ENCODE measurements at regions of chr13 and their contacts with region 1.

Region 1: DNA sequence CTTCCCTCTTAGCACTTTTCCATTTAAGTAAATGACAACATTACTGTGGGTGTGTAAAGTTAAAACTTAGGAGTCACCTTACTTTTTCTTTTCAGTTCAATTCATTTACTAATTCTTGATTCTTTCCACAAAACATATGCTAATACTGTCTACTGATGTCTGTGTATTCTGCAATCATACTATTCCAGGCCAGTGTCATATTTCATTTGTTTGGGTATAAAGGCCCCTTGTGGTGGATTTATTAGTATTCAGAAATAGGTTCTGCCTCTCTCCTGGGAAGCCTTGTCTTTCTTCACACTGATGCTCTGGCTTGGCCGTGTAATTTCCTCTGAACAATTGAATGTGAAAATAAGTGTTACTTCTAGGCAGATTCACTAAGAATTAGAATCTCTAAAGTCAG is 621.9 kb upstream of the SPRY2 start:
- DNase-seq: peak; percentile 32
- H3K4me3 ChIP-seq: no peak overlapping the region
- H3K27ac ChIP-seq: peak overlapping the region; percentile 70
- H3K4me1 ChIP-seq: peaks cover 15% of the 10 kb centered on the region
- H3K27me3 ChIP-seq: no peaks in the 10 kb centered on the region
- CTCF ChIP-seq: no peak
- POLR2A ChIP-seq: no peak

Region 2: GRCh38 chr13:80529734-80530133 is 433.1 kb before region 1 on chr13:
- CTCF ChIA-PET with region 1: no interaction called
- POLR2A ChIA-PET with region 1: no interaction called
- dilution Hi-C with region 1: no loop called
- intact Hi-C with region 1: loop called (anchors 1 kb)
- DNase-seq: peak; percentile 40
- H3K4me3 ChIP-seq: no peak overlapping the region
- H3K27ac ChIP-seq: peak overlapping the region; percentile 44
- H3K4me1 ChIP-seq: peaks cover 38% of the 10 kb centered on the region
- H3K27me3 ChIP-seq: no peaks in the 10 kb centered on the region
- CTCF ChIP-seq: no peak
- POLR2A ChIP-seq: no peak

Region 3: GRCh38 chr13:80630685-80631121 is 332.2 kb before region 1 on chr13:
- CTCF ChIA-PET with region 1: interaction called, 3 read pairs
- POLR2A ChIA-PET with region 1: no interaction called
- dilution Hi-C with region 1: no loop called
- intact Hi-C with region 1: loop called (anchors 2 kb)
- DNase-seq: peak; percentile 85
- H3K4me3 ChIP-seq: no peak overlapping the region
- H3K27ac ChIP-seq: peak overlapping the region; percentile 41
- H3K4me1 ChIP-seq: peaks cover 17% of the 10 kb centered on the region
- H3K27me3 ChIP-seq: no peaks in the 10 kb centered on the region
- CTCF ChIP-seq: no peak
- POLR2A ChIP-seq: no peak

Region 4: DNA sequence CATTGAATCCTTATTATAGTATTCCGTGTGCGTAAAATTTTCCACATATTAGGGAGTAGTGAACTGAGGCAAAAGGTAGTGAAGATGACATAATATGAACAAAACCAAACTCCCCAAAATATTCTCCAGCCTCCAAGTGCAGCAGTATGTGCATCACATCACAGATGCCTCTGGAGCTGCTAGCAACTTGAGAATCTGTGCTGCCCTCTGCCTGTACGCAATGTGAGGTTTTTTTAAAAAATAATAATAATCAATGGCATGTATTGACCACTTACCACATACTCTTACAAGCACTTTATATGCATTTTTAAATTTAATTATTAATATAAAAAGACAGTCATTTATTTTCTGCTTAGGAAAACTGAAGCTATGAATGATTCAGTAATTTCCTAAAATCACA is 38.9 kb before region 1 on chr13:
- CTCF ChIA-PET with region 1: interaction called, 4 read pairs
- POLR2A ChIA-PET with region 1: no interaction called
- dilution Hi-C with region 1: no loop called
- intact Hi-C with region 1: loop called (anchors 2 kb)
- DNase-seq: peak; percentile 22
- H3K4me3 ChIP-seq: no peak overlapping the region
- H3K27ac ChIP-seq: peak overlapping the region; percentile 65
- H3K4me1 ChIP-seq: peaks cover 27% of the 10 kb centered on the region
- H3K27me3 ChIP-seq: no peaks in the 10 kb centered on the region
- CTCF ChIP-seq: no peak
- POLR2A ChIP-seq: no peak

Region 5: DNA sequence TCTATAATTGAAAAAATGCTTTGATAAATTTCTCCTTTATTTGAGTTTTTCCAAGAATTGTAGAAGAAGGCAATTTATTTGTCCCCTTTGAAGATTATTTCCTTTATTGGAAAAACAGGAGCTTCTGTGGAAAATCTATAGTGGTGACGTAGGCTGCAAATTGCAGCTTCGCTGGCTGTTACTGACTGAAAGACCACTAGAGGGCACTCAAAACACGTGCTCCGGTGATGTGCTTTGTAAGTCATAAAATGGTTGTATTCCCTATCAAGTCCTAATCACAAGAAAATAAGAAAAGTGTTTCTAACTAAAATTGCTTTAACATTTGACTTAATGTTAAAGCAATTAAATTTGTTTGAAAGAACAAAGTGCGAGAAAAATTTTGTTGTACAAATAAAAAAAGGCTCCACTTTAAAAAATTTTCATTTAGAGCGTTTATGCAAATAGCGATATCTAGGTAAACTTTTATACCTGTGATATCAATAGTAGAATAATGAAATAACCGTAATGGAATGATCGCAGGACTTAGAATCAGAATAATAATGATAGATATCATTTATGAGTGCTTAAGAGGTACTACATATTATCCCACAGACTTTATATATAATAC is 16.3 kb after region 1 on chr13:
- CTCF ChIA-PET with region 1: interaction called, 29 read pairs
- POLR2A ChIA-PET with region 1: no interaction called
- dilution Hi-C with region 1: no loop called
- intact Hi-C with region 1: no loop called
- DNase-seq: peak; percentile 73
- H3K4me3 ChIP-seq: no peak overlapping the region
- H3K27ac ChIP-seq: no peak overlapping the region
- H3K4me1 ChIP-seq: no peaks in the 10 kb centered on the region
- H3K27me3 ChIP-seq: no peaks in the 10 kb centered on the region
- CTCF ChIP-seq: peak; percentile 78 to 86
- POLR2A ChIP-seq: no peak